ENCODE measurements at regions of chr2 and their contacts with region 1.

Region 1: DNA sequence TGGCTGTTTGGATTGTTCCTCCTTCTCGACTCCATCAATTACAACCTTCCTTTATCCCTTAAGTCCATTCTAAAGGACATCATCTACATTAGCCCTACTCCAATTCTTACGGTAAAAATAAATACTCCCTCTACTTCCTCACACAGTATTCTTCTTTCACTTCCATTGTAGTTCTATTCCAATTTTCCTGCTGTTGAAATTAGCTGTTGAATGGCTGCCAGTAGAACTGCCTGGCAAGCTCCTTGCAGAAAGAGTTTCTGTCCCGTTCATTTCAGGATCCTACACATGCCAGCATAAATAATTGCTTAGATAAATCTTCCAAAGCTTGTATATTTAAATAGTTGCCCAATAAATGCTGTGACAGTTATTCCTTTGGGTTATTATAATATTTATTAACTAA is 459.3 kb upstream of the TRIB2 start:
- DNase-seq: no peak
- H3K4me3 ChIP-seq: no peak overlapping the region
- H3K4me3 Mint-ChIP-seq: no peak overlapping the region
- H3K27ac Mint-ChIP-seq: no peak overlapping the region
- H3K4me1 ChIP-seq: no peaks in the 10 kb centered on the region
- H3K4me1 Mint-ChIP-seq: no peaks in the 10 kb centered on the region
- H3K27me3 ChIP-seq: no peaks in the 10 kb centered on the region
- H3K27me3 Mint-ChIP-seq: peaks cover 2% of the 10 kb centered on the region
- CTCF ChIP-seq: no peak

Region 2: GRCh38 chr2:12155303-12156051 is 102.0 kb before region 1 on chr2:
- CTCF ChIA-PET with region 1: no interaction called
- POLR2A ChIA-PET with region 1: no interaction called
- intact Hi-C with region 1: no loop called
- DNase-seq: no peak
- H3K4me3 ChIP-seq: no peak overlapping the region
- H3K4me3 Mint-ChIP-seq: no peak overlapping the region
- H3K27ac Mint-ChIP-seq: no peak overlapping the region
- H3K4me1 ChIP-seq: no peaks in the 10 kb centered on the region
- H3K4me1 Mint-ChIP-seq: no peaks in the 10 kb centered on the region
- H3K27me3 ChIP-seq: no peaks in the 10 kb centered on the region
- H3K27me3 Mint-ChIP-seq: peaks cover 8% of the 10 kb centered on the region
- CTCF ChIP-seq: no peak

Region 3: DNA sequence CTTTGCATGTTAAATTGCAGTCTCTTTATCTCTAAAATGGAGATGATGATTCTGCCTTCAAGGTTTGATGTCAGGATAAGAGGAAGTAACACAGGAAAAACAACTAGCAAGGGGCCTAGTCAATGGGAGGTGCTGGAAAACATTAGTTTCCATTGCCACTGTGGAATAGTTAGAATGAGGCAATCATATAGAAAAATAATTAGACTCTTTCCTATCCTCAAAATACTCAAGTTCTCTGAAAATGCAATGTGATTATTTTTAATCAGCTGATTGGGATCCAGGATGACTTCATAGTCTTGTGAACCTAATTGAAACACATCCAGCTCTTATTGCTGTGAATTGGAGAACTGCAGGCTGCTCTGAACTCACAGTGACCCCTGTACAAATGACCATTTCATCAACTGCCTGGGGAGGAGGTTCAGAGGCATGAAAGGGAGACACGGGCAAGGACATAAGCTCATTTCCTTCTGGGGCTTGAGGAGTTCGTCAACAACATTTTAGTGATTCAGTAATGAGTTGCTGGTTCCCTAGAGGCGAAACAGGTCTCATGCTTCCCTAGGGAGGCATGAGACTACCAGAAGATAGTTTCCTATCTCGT is 88.6 kb before region 1 on chr2:
- CTCF ChIA-PET with region 1: no interaction called
- POLR2A ChIA-PET with region 1: no interaction called
- intact Hi-C with region 1: no loop called
- DNase-seq: no peak
- H3K4me3 ChIP-seq: no peak overlapping the region
- H3K4me3 Mint-ChIP-seq: no peak overlapping the region
- H3K27ac Mint-ChIP-seq: no peak overlapping the region
- H3K4me1 ChIP-seq: no peaks in the 10 kb centered on the region
- H3K4me1 Mint-ChIP-seq: no peaks in the 10 kb centered on the region
- H3K27me3 ChIP-seq: 0 out of 2 replicates have a peak, but pooled peaks cover 2% of the 10 kb centered on the region
- H3K27me3 Mint-ChIP-seq: peaks cover 4% of the 10 kb centered on the region
- CTCF ChIP-seq: no peak

Region 4: GRCh38 chr2:12236136-12236844 is 21.2 kb before region 1 on chr2:
- CTCF ChIA-PET with region 1: no interaction called
- POLR2A ChIA-PET with region 1: no interaction called
- intact Hi-C with region 1: no loop called
- DNase-seq: no peak
- H3K4me3 ChIP-seq: no peak overlapping the region
- H3K4me3 Mint-ChIP-seq: no peak overlapping the region
- H3K27ac Mint-ChIP-seq: no peak overlapping the region
- H3K4me1 ChIP-seq: no peaks in the 10 kb centered on the region
- H3K4me1 Mint-ChIP-seq: no peaks in the 10 kb centered on the region
- H3K27me3 ChIP-seq: no peaks in the 10 kb centered on the region
- H3K27me3 Mint-ChIP-seq: peaks cover 4% of the 10 kb centered on the region
- CTCF ChIP-seq: no peak

Region 5: GRCh38 chr2:12270876-12271588 is 13.6 kb after region 1 on chr2:
- CTCF ChIA-PET with region 1: no interaction called
- POLR2A ChIA-PET with region 1: no interaction called
- intact Hi-C with region 1: no loop called
- DNase-seq: no peak
- H3K4me3 ChIP-seq: no peak overlapping the region
- H3K4me3 Mint-ChIP-seq: no peak overlapping the region
- H3K27ac Mint-ChIP-seq: no peak overlapping the region
- H3K4me1 ChIP-seq: no peaks in the 10 kb centered on the region
- H3K4me1 Mint-ChIP-seq: no peaks in the 10 kb centered on the region
- H3K27me3 ChIP-seq: no peaks in the 10 kb centered on the region
- H3K27me3 Mint-ChIP-seq: peaks cover 9% of the 10 kb centered on the region
- CTCF ChIP-seq: no peak

Region 6: GRCh38 chr2:12587729-12588522 is 330.4 kb after region 1 on chr2:
- CTCF ChIA-PET with region 1: no interaction called
- POLR2A ChIA-PET with region 1: no interaction called
- intact Hi-C with region 1: loop called (anchors 10 kb)
- DNase-seq: no peak
- H3K4me3 ChIP-seq: no peak overlapping the region
- H3K4me3 Mint-ChIP-seq: no peak overlapping the region
- H3K27ac Mint-ChIP-seq: no peak overlapping the region
- H3K4me1 ChIP-seq: no peaks in the 10 kb centered on the region
- H3K4me1 Mint-ChIP-seq: no peaks in the 10 kb centered on the region
- H3K27me3 ChIP-seq: no peaks in the 10 kb centered on the region
- H3K27me3 Mint-ChIP-seq: peaks cover 5% of the 10 kb centered on the region
- CTCF ChIP-seq: no peak

Measured in Caco-2 (cell line).